ENCODE measurements at regions of chr16 and their contacts with region 1.

Region 1: GRCh38 chr16:49855280-49855821 is 561 bp downstream of the ZNF423 start:
- DNase-seq: peak; percentile 89
- ATAC-seq: peak; percentile 59 to 69
- H3K4me3 ChIP-seq: peak overlapping the region; percentile 71 to 96 (median 84)
- H3K27ac ChIP-seq: peak overlapping the region; percentile 92 to 98 (median 94)
- H3K4me1 ChIP-seq: peaks cover 39 to 50% of the 10 kb centered on the region in 2 donors
- H3K27me3 ChIP-seq: no peaks in the 10 kb centered on the region
- CTCF ChIP-seq: no peak
- POLR2A ChIP-seq: peak; percentile 90 to 96

Region 2: DNA sequence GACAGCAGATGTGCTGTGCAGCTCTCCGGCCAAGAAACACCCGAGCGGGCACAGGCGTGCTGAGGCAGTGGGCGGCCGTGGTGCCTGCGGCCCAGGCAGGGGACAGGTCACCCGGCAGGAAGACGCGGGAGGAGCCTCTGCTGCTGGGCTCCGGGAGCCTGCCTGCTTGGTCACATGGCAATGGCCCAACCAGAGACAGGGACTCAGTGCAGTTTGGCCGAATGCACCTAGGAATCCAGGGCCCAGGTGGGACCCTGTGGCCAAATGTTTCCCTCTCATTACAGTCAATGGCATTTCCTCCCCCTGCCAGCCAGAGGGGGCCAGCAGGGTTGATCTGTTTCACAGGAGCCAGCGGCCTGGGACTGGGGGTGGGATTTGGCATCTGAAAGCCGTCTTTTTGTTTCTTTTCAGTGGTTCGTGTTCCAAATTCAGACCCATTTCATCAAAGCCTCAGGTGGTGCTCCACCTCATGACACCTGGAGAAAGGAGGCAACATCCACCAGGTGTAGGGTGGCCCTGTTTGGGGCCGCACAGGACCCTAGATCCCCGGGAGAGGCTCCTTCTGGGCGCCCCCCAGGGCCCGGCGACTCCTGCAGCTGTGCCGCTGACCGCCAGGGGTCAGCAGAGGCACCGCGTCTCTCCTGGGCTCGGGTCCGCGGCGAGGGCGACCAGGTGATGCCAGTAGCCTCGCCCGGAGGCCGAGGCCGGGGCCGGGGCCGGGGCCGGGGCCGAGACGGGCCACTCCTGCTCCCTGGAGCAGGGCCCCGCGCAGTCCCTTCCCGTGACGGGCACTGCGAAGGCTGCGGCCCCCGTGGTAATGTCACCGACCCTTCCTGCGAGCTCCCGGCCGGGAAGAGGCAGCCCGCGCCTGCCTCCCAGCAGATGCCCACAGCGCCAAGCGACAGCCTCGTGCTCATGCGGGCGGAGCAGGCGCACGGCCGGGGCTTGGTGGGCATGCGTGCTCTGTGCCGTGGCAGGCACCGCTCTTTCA is 363.3 kb before region 1 on chr16:
- in situ Hi-C with region 1: loop called in 1 of 4 experiments (anchors 25 kb)
- intact Hi-C with region 1: loop called (anchors 5 kb)
- DNase-seq: no peak
- ATAC-seq: peak; percentile 68 to 76
- H3K4me3 ChIP-seq: peak overlapping the region; percentile 46 to 63 (median 48)
- H3K27ac ChIP-seq: peak overlapping the region in 3 of 4 donors; percentile 11 to 47 (median 45)
- H3K4me1 ChIP-seq: peaks cover 5 to 8% of the 10 kb centered on the region in 2 donors
- H3K27me3 ChIP-seq: no peaks in the 10 kb centered on the region
- CTCF ChIP-seq: peak; percentile 80 to 98 (median 91)
- POLR2A ChIP-seq: no peak

Region 3: DNA sequence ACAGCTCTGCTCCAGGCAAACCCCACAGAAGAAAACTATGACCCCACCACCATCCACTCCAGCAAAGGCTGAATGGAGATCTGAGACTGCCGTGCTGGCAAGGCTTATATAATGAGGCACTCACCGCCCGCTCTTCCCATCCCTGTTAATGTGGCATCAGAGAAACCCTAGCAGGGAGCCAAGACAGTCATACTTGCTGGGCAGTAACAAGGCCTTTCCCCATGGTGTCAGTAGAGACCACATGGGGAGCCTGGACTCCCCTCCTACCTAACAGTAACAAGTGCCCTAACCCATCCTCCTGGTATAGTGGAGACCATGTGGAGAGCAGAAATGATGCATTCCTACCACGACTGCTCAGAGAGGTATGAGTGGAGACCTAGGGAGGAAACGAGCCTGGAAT is 246.6 kb before region 1 on chr16:
- in situ Hi-C with region 1: loop called (anchors 25 kb)
- intact Hi-C with region 1: no loop called
- DNase-seq: peak in 1 of 2 donors; percentile 45
- ATAC-seq: peak; percentile 58 to 92
- H3K4me3 ChIP-seq: no peak overlapping the region
- H3K27ac ChIP-seq: no peak overlapping the region
- H3K4me1 ChIP-seq: peaks cover 0 to 6% of the 10 kb centered on the region in 2 donors
- H3K27me3 ChIP-seq: no peaks in the 10 kb centered on the region
- CTCF ChIP-seq: peak in 4 of 5 experiments; percentile 25 to 60 (median 52)
- POLR2A ChIP-seq: no peak

Region 4: DNA sequence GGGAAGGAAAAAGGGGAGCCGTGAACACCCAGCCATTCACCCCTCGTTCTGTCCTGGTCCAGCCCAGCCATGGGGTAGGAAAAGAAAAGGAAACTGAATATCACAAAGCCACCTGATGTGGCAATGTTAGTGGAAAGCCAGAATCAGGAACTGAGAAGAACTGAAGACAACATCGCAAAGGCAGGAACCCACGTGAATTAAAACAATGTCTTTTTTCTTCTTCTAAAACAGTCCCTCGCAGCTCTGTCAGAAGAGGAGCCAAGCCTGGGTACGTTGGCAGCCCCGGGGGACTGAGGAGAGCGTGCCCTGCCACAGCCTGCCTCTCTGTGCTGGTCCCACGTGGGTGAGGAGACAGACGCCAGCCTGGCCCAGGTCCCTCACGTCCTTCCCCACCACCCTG is 54.5 kb before region 1 on chr16:
- in situ Hi-C with region 1: no loop called
- intact Hi-C with region 1: no loop called
- DNase-seq: no peak
- ATAC-seq: no peak
- H3K4me3 ChIP-seq: no peak overlapping the region
- H3K27ac ChIP-seq: no peak overlapping the region
- H3K4me1 ChIP-seq: peaks cover 6 to 20% of the 10 kb centered on the region in 2 donors
- H3K27me3 ChIP-seq: no peaks in the 10 kb centered on the region
- CTCF ChIP-seq: no peak
- POLR2A ChIP-seq: no peak

Region 5: DNA sequence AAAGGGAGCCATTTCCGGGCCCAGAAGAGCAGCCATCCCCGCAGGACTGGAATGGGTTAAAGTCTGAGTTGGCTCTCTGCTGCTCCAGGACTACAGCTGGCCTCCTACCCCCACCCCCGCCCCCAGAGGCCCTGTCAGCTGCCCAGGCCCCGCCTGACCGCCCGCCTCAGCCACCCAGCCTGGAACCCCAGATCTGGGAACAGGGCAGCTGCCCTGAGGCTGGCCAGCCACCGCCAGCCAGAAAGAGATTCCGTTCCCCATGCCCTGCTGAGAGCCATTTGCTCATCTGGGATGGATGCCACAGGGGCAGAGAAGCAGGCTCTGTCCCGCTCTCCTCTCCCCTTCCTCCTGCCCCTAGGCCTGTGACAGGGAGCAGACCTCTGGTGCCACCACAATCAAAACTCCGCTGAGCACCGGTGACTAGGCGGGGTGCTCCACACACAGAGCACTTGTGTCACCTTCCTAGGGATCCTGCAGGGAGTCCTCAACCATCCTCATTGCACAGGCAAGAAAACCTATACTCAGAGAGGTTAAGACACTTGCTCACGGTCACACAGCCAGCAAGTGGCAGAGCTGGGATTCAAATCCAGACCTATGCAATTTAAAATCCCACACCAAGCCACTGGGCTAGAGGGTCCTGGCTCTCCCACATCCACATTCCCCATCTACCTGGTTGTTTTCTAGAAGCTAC is 43.6 kb before region 1 on chr16:
- in situ Hi-C with region 1: no loop called
- intact Hi-C with region 1: loop called (anchors 1 kb)
- DNase-seq: peak; percentile 52 to 83
- ATAC-seq: peak; percentile 83 to 85
- H3K4me3 ChIP-seq: peak overlapping the region in 1 of 4 donors; percentile 24
- H3K27ac ChIP-seq: peak overlapping the region; percentile 69 to 97 (median 80)
- H3K4me1 ChIP-seq: peaks cover 64 to 73% of the 10 kb centered on the region in 2 donors
- H3K27me3 ChIP-seq: no peaks in the 10 kb centered on the region
- CTCF ChIP-seq: no peak
- POLR2A ChIP-seq: peak in 1 of 2 donors; percentile 21

Region 6: GRCh38 chr16:49876716-49877129 is 21.4 kb after region 1 on chr16:
- in situ Hi-C with region 1: no loop called
- intact Hi-C with region 1: loop called (anchors 1 kb)
- DNase-seq: peak in 1 of 2 donors; percentile 47
- ATAC-seq: peak; percentile 58 to 86
- H3K4me3 ChIP-seq: peak overlapping the region; percentile 47 to 55 (median 52)
- H3K27ac ChIP-seq: no peak overlapping the region
- H3K4me1 ChIP-seq: peaks cover 5 to 10% of the 10 kb centered on the region in 2 donors
- H3K27me3 ChIP-seq: peaks cover 0 to 7% (median 0%) of the 10 kb centered on the region in 3 donors
- CTCF ChIP-seq: peak; percentile 69 to 96 (median 85)
- POLR2A ChIP-seq: no peak

Measured in gastrocnemius medialis (tissue), 4 donors.